ENCODE measurements at regions of chr3 and their contacts with region 1.

Region 1: DNA sequence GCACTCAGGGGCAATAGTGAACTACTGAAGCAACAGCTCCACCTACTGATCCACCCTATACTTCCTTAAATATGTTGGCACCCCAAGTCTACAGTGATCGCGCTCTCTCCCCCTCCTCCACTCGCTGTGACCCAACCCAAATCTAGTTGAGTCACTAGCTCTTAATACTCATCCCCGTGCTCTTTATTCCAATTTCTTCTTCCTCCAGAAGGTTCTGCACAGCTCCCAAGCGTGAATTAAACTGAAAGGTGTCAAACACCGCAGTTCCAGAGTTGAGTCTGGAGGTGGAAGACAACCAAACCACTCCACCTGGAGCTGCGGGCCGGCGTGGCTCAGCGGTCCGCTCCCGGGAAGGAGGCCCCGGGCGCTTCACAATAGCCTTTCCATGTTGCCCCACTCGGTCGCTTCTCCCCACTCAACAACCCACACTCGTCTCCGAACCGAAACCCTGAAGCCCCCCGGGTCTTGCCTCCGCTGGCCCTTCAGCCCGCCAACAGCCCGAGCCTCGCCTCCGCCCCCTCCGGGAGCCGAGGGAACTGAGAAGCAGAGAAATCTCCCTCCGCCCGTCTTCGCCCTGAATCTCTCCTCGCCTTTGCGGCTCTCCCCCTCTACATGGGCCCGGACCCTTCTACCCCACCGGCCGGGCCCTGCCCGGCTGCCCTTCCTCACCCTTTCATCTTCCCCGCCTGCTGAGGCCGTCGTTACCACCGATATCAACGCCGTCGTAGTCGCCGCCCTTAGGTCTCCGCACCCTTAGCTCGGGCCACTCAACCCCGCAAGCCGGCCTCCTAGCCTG is 578 bp downstream of the NAA50 start:
- DNase-seq: peak; percentile 70
- ATAC-seq: peak; percentile 71
- H3K4me3 Mint-ChIP-seq: peak overlapping the region; percentile 98
- H3K27ac Mint-ChIP-seq: peak overlapping the region; percentile 86
- H3K4me1 Mint-ChIP-seq: peaks cover 56% of the 10 kb centered on the region
- H3K27me3 Mint-ChIP-seq: no peaks in the 10 kb centered on the region
- CTCF ChIP-seq: peak; percentile 23

Region 2: DNA sequence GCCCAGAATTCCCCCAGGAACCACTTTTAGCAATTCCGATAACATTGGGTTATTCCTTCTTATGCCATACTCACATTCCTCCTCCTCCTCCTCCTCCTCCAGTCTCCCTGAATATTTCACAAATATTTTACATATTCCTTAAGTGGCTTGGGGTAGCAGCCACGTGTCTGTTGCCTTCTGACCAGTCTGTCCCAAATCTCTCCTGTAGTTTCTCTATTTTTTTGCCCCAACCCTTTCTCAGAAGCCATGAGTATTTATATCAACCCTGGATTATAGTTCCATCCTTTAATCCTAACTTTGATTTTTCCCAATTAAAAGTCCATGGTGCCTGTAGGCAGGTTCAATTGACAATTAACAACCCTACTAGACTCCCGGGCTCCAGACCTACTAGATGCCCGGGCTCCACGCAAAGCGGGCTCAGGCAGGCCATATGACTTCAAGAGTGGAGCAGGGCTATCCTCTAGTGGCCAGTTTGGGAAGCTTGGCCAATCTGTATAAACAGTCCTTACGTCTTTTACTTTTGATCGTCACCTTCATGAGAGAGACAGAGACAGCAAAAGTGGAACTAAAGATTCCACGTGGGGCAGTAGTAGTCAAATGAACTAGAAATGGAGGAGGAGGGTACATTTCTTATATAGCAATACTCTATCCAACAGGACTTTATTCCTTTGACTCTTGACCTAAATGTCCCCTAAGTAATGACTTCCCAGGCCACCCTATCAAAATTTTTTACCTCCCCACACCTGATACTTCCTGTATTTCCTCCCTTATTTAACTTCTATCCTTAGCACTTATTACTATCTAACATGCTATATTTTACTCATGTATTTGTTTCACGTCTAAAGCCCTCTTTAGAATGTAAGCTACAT is 118.7 kb before region 1 on chr3:
- CTCF ChIA-PET with region 1: interaction called, 16 read pairs
- POLR2A ChIA-PET with region 1: no interaction called
- DNase-seq: peak; percentile 76
- ATAC-seq: peak; percentile 97
- H3K4me3 Mint-ChIP-seq: no peak overlapping the region
- H3K27ac Mint-ChIP-seq: no peak overlapping the region
- H3K4me1 Mint-ChIP-seq: 0 out of 2 replicates have a peak, but pooled peaks cover 7% of the 10 kb centered on the region
- H3K27me3 Mint-ChIP-seq: peaks cover 14% of the 10 kb centered on the region
- CTCF ChIP-seq: peak; percentile 69; the same call in 1 of the 2 replicates

Region 3: GRCh38 chr3:113696658-113697499 is 48.6 kb before region 1 on chr3:
- CTCF ChIA-PET with region 1: interaction called, 15 read pairs
- POLR2A ChIA-PET with region 1: interaction called, 7 read pairs
- DNase-seq: peak; percentile 99
- ATAC-seq: peak; percentile 95
- H3K4me3 Mint-ChIP-seq: no peak overlapping the region
- H3K27ac Mint-ChIP-seq: no peak overlapping the region
- H3K4me1 Mint-ChIP-seq: peaks cover 13% of the 10 kb centered on the region
- H3K27me3 Mint-ChIP-seq: no peaks in the 10 kb centered on the region
- CTCF ChIP-seq: no peak

Measured in WTC11 (cell line).